Panc1 (cell line): ENCODE measurements at regions of chr18 and their contacts with region 1.

Region 1: DNA sequence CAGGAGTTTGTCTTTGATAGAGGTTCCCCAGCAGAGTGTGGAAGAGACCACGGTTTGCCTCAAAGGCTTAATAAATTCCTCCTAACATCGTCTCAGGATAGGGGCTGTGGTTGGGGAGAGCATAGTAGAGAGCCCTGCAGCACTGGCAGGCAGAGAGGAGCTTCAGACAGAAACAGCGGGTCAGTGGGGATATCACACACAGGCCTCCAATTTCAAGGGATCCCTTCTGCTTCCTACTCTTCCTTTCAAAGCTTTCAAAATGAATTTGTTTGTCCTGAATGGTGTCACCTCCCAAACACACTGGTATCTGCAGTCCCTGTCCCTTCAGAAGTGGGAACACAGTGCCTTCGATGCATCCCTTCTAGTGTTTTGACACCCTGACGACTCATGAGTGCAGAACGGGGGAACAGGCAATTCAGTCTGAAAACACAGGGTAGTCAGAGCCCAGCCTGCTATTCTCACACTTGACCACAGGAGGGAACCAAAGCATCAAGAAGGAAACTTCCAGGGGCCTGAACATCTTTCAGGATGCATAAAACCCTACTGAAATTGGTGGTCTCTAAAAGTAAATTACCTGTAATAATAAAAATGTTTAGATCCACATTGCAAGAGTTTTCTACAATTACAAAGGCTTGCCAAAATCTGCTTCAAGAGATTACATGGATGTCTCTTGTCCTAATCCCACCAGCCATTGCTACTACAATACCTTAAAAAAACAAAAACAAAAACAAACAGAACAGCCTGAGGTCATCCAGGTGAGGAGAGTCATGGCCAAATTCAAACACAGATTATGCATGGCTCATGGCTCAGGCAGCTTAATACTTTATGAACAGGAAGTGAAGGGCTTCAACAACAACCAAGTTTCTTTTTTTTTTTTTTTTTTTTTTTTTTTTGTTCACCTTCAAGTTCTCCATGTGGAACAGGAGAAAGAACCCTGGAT is 49.8 kb downstream of the SLC14A2 start:
- DNase-seq: peak; percentile 64
- ATAC-seq: peak; percentile 87
- H3K4me3 ChIP-seq: no peak overlapping the region
- H3K27ac ChIP-seq: no peak overlapping the region
- H3K4me1 ChIP-seq: no peaks in the 10 kb centered on the region
- H3K27me3 ChIP-seq: no peaks in the 10 kb centered on the region; the same call in 1 of the 2 replicates
- CTCF ChIP-seq: peak; percentile 79

Region 2: DNA sequence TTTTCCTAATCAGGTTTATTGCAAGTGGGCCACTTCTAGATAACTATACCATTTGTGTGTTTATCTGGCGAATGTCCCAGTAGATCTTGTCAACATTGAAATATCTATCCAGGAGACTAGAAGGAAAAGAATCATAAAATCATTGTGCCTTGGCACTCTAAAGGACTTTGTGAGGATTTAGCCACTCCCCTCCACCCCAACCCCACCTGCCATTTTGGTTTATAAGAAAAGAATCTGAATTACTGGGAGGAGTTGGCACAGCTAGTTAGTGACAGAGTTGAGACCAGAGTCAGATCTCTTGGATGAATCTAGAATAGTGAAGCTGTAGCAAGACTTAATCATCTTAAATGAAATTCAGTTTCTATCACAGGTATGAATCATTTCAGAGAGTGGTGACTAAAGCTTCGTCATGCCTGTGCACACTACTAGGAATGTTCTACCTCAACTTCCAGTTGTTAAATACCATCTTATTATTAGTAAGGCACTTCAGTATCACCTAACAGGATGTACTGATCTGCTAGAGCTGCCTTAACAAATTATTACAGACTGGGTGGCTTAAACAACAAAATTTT is 262.5 kb before region 1 on chr18:
- CTCF ChIA-PET with region 1: no interaction called
- POLR2A ChIA-PET with region 1: no interaction called
- in situ Hi-C with region 1: no loop called
- intact Hi-C with region 1: no loop called
- DNase-seq: no peak
- ATAC-seq: no peak
- H3K4me3 ChIP-seq: no peak overlapping the region
- H3K27ac ChIP-seq: no peak overlapping the region
- H3K4me1 ChIP-seq: no peaks in the 10 kb centered on the region
- H3K27me3 ChIP-seq: no peaks in the 10 kb centered on the region
- CTCF ChIP-seq: no peak

Region 3: DNA sequence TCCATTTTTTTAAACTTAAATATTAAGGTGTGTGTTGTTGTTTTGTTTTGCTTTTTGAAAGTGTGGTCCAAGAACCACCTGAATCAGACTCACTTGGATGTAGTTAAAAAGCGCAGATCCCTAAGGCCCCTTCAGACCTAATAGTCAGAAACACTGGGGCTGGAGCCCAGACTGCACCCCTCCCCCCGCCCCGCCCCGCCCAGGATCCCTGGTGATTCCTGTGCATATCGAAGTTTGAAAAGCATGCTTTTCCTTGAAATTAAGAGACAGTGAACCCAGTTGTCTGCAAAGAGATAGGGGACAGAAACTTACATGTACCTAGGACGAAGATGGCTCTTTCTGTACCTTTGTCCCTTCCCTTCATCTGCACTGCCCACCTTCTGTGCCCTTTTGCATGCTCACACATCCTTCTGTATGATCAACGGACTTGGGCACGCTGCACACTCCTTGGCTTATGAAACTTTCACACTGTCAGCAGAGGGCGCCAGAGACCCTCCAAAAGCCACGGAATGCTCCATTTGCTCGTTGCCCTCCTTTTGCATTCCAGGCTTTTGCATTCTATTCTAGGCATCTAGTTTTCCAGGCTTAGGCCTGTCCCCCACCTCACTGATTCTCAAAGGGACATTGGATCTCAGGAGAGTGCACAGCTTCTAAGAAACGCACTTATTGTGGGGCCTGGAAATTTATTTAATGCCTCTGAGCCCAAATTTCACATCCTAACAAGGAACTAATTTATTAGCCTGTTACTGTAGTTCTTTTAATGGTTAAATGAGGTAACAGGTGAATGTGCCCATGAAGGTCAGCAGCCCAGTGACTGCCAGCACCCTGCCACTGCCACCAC is 26.1 kb after region 1 on chr18:
- CTCF ChIA-PET with region 1: interaction called, 15 read pairs
- POLR2A ChIA-PET with region 1: no interaction called
- in situ Hi-C with region 1: no loop called
- intact Hi-C with region 1: no loop called
- DNase-seq: peak; percentile 53
- ATAC-seq: peak; percentile 96
- H3K4me3 ChIP-seq: no peak overlapping the region
- H3K27ac ChIP-seq: no peak overlapping the region
- H3K4me1 ChIP-seq: no peaks in the 10 kb centered on the region
- H3K27me3 ChIP-seq: no peaks in the 10 kb centered on the region
- CTCF ChIP-seq: peak; percentile 72

Region 4: DNA sequence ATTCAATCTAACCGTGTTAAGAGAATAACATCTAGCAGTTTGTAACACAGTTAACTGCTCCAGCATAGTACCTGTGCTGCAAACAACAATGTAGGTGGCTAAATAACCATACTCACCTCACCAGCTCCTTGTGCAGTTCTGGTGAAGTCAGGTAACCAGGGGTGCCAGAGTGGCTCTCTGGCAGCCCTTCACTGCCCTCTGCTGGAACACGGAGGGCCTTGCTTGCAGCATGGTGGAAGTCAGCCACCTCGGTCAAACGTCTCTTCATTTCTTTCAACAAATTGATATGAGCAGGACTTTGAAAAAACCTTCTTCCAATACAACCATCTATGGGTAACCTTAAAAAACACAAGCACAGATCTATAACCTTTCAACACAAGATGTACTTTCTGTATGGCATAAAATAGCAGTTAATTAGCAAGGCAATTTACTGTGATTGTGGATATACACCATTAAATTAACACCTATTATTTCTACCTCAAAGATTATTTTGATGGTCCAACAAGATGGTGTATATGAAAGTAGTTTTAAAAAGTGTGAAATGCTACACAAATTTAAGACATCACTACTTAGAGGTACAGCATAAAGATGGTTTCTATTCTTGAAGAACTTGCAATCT is 245.4 kb after region 1 on chr18:
- CTCF ChIA-PET with region 1: no interaction called
- POLR2A ChIA-PET with region 1: no interaction called
- in situ Hi-C with region 1: no loop called
- intact Hi-C with region 1: loop called (anchors 2 kb)
- DNase-seq: peak; percentile 32
- ATAC-seq: peak; percentile 91
- H3K4me3 ChIP-seq: no peak overlapping the region
- H3K27ac ChIP-seq: no peak overlapping the region
- H3K4me1 ChIP-seq: no peaks in the 10 kb centered on the region
- H3K27me3 ChIP-seq: no peaks in the 10 kb centered on the region
- CTCF ChIP-seq: peak; percentile 78

Region 5: DNA sequence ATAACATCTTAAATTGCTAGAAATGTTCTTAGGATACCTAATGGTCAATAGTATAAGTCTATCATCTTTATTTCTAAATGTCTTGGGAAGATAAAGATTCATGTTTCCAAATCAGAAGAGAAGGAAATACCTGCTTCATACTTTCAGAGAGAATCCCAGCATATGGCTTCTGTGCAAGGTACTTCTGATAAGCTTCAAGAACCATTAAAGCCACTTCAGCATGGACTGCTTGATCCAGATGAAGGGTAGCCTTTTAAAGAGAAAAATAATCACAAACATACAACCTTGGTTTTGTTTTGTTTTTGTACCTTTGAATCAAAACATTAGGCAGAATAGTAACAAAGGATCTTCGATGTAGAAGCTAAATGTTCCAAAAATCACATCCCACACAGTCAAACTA is 258.0 kb after region 1 on chr18:
- CTCF ChIA-PET with region 1: interaction called, 12 read pairs
- POLR2A ChIA-PET with region 1: no interaction called
- in situ Hi-C with region 1: no loop called
- intact Hi-C with region 1: no loop called
- DNase-seq: no peak
- ATAC-seq: no peak
- H3K4me3 ChIP-seq: no peak overlapping the region
- H3K27ac ChIP-seq: no peak overlapping the region
- H3K4me1 ChIP-seq: no peaks in the 10 kb centered on the region
- H3K27me3 ChIP-seq: no peaks in the 10 kb centered on the region
- CTCF ChIP-seq: no peak

Region 6: GRCh38 chr18:45974088-45974536 is 309.0 kb after region 1 on chr18:
- CTCF ChIA-PET with region 1: interaction called, 10 read pairs
- POLR2A ChIA-PET with region 1: no interaction called
- in situ Hi-C with region 1: no loop called
- intact Hi-C with region 1: loop called (anchors 5 kb)
- DNase-seq: no peak
- ATAC-seq: peak; percentile 83
- H3K4me3 ChIP-seq: peak overlapping the region in 1 of 2 experiments; percentile 23; a peak in 1 of 4 replicates
- H3K27ac ChIP-seq: no peak overlapping the region
- H3K4me1 ChIP-seq: no peaks in the 10 kb centered on the region
- H3K27me3 ChIP-seq: no peaks in the 10 kb centered on the region
- CTCF ChIP-seq: peak; percentile 66

Region 7: DNA sequence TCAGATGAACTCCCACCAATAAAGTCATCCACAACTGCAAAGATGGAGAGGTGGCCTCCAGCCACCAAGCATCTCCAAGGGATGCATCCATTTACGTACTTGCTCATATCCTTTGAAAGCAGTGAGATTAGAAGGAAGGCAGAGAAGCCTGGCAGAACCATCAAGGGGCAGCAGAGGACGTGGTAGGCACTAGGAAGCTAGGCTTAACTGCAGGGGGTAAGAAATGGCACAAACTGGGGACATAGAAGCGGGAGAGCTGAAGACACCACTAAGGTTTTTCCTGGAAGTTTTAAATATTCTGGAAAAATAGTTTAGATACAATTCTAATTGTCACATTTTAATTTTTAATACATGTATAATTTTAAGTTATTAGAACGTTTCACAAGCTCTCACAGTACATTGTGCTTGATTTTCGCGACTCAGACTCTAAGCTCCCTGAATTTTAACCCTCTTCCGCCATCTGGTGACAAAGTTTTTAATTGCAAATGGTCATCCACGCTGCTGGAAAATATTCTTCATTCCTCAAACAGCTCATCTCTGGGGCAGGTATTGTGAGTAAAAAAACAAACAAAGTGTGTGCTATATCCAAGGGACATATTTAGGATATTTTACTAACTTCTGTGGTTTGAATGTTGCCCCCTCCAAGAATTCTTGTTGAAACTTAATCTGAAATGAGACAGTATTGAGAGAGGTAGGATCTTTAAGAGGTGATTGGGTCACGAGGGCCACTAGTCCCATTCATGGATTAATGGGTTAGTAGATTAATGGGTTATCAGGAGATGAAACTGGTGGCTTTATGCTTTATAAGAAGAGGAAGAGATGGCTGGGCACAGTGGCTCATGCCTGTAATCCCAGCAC is 408.6 kb after region 1 on chr18:
- CTCF ChIA-PET with region 1: interaction called, 26 read pairs
- POLR2A ChIA-PET with region 1: no interaction called
- in situ Hi-C with region 1: no loop called
- intact Hi-C with region 1: loop called (anchors 5 kb)
- DNase-seq: peak; percentile 82
- ATAC-seq: peak; percentile 70
- H3K4me3 ChIP-seq: no peak overlapping the region
- H3K27ac ChIP-seq: no peak overlapping the region
- H3K4me1 ChIP-seq: no peaks in the 10 kb centered on the region
- H3K27me3 ChIP-seq: no peaks in the 10 kb centered on the region
- CTCF ChIP-seq: peak; percentile 59